WTC11 (cell line): ENCODE measurements at regions of chr3 and their contacts with region 1.

Region 1: GRCh38 chr3:190159902-190160435 is 39.3 kb upstream of the P3H2 start:
- DNase-seq: no peak
- ATAC-seq: no peak
- H3K4me3 Mint-ChIP-seq: no peak overlapping the region
- H3K27ac Mint-ChIP-seq: no peak overlapping the region
- H3K4me1 Mint-ChIP-seq: peaks cover 30% of the 10 kb centered on the region
- H3K27me3 Mint-ChIP-seq: no peaks in the 10 kb centered on the region
- CTCF ChIP-seq: no peak

Region 2: GRCh38 chr3:189975391-189975990 is 184.5 kb before region 1 on chr3:
- CTCF ChIA-PET with region 1: no interaction called
- POLR2A ChIA-PET with region 1: interaction called, 11 read pairs
- DNase-seq: no peak
- ATAC-seq: no peak
- H3K4me3 Mint-ChIP-seq: no peak overlapping the region
- H3K27ac Mint-ChIP-seq: no peak overlapping the region
- H3K4me1 Mint-ChIP-seq: peaks cover 4% of the 10 kb centered on the region
- H3K27me3 Mint-ChIP-seq: no peaks in the 10 kb centered on the region
- CTCF ChIP-seq: no peak

Region 3: GRCh38 chr3:190108804-190109203 is 51.2 kb before region 1 on chr3:
- CTCF ChIA-PET with region 1: no interaction called
- POLR2A ChIA-PET with region 1: no interaction called
- DNase-seq: no peak
- ATAC-seq: no peak
- H3K4me3 Mint-ChIP-seq: no peak overlapping the region
- H3K27ac Mint-ChIP-seq: peak overlapping the region; percentile 69
- H3K4me1 Mint-ChIP-seq: peaks cover 13% of the 10 kb centered on the region
- H3K27me3 Mint-ChIP-seq: no peaks in the 10 kb centered on the region
- CTCF ChIP-seq: no peak